ENCODE measurements at regions of chr15 and their contacts with region 1.

Region 1: DNA sequence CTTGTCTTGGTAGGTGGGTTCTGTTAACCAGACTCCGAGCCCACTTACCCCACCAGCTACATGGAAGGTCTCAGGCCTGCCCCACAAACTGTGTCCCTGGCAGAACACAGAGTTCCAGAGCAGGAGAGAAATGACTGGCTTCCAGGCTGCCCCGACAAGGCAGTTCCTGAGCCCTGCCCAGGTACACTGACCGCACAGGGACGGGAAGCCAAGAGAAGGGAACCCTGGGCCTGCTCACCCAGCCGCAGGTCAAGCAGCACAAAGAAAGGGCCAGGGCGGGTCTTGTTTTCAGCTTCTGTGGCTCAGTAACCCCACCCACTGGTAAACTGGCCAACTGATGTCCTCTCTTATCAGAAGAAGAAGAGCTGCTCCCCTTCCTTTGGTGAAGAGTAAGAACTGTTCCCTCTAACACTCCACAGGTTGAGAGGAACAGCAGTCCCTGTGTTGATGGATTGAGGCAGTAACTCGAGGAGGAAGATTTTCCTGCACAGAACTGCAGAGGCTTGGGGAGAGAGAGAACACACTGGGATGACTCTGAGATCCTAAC is 68.4 kb downstream of the CRTC3 start:
- DNase-seq: peak in 6 of 10 donors; percentile 45 to 78 (median 58)
- H3K4me3 ChIP-seq: no peak overlapping the region
- H3K27ac ChIP-seq: peak overlapping the region; percentile 20 to 93 (median 84)
- H3K27me3 ChIP-seq: no peaks in the 10 kb centered on the region
- CTCF ChIP-seq: peak in 51 of 56 donors; percentile 12 to 64 (median 40)

Region 2: DNA sequence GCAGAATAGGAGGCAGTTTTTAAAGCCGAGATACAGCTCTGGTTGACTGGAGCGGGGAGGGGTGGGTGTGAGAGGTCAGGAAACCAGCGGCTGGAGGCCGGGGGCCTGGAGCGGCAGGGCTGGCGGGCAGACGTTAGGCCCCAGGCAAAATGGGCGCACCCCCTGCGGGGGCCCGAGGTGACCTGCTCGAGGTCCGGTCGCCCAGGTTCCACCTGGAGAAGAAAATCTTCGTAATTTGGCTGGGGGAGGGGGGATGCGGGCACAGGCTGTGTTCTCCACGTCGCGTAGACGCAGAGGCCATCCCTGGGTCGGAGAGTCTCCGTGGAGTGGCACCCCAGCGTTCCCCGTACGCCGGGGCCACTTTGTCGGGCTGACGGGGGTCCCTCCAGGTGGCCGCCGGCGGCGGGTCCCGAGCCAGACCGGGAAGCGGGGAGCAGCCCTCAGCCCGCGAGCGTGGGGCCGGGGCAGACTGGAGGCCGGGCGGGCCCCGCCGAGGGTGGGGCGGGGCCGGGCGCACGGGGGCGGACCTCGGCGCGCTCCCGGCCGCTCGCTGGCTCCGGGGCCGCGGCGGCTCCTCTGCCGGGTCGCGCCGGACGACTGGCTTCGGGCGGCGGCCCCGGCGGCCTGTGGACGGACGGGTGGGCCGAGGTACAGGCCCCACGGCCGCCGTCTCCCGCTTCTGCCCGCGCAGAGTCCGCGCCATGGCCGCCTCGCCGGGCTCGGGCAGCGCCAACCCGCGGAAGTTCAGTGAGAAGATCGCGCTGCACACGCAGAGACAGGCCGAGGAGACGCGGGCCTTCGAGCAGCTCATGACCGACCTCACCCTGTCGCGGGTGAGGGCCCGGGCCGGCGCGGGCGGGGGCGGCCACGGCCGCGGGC is 68.5 kb before region 1 on chr15 and contains the start of gene CRTC3:
- intact Hi-C with region 1: loop called in 1 of 2 experiments (anchors 2 kb)
- DNase-seq: peak in 9 of 10 donors; percentile 33 to 77 (median 46)
- H3K4me3 ChIP-seq: peak within 1 kb of the TSS; percentile 53 to 94 (median 86)
- H3K27ac ChIP-seq: peak within 1 kb of the TSS; percentile 64 to 97 (median 93)
- H3K27me3 ChIP-seq: no peaks in the 10 kb centered on the region
- CTCF ChIP-seq: peak in 3 of 56 donors; percentile 1 to 5 (median 5)
- total RNA-seq, gene CRTC3: 33.6 to 101 (median 56.1) TPM

Region 3: DNA sequence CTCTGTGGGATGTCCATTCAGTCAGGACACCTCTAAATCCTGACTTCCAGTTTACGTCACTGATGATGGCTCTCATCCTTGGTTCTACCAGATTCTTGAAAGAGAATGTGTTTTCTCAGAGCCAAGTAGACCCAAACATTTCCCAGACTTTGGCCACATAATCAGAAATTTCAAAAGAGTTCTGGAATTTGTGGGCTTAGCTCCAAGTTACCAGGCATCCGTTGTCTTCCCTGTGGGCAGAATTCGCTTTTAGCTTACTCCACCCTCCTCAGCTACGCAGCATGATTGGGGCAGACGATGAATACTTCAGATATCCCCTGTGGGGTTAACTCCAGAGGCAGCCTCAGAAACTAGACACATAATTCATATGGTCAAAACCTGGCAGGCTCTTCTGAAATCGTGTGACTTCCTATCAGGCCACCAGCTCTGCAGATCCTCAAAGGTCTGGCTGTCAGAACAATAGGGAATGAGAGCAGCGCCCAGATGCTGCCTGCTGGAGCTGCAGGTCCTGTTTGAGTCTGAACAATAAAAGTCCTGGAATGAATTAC is 37.8 kb before region 1 on chr15:
- intact Hi-C with region 1: loop called in 1 of 2 experiments (anchors 5 kb)
- DNase-seq: no peak
- H3K4me3 ChIP-seq: no peak overlapping the region
- H3K27ac ChIP-seq: peak overlapping the region in 58 of 59 donors; percentile 17 to 93 (median 78)
- H3K27me3 ChIP-seq: no peaks in the 10 kb centered on the region
- CTCF ChIP-seq: peak in 1 of 56 donors; percentile 17

Region 4: DNA sequence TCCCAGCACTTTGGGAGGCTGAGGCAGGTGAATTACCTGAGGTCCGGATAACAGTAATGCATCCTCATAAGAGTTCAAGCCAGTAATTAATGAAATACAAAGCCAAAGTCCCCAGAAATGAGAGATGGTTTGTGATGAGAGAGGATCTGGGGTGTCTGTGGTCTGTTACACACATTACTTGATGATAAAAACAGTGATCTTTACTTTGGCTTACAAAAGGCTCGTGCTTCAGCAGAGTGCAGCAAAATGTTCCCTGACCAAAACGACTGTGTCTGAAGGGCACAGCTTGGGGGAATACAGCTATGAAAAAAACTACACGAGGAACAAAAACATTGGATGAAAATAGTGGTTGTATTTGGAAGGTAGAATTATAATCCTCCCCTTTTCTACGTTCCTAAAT is 27.5 kb before region 1 on chr15:
- intact Hi-C with region 1: no loop called
- DNase-seq: no peak
- H3K4me3 ChIP-seq: peak overlapping the region in 19 of 59 donors; percentile 1 to 39 (median 18)
- H3K27ac ChIP-seq: peak overlapping the region; percentile 18 to 96 (median 88)
- H3K27me3 ChIP-seq: no peaks in the 10 kb centered on the region
- CTCF ChIP-seq: no peak